CD4-positive, alpha-beta memory T cell (primary cell): ENCODE measurements at regions of chr16 and their contacts with region 1.

Region 1: GRCh38 chr16:4766874-4767628 is at the start of gene ZNF500:
- DNase-seq: peak; percentile 90 to 93 (median 93)
- H3K4me3 ChIP-seq: peak within 1 kb of the TSS; percentile 94 to 96
- H3K4me3 Mint-ChIP-seq: peak within 1 kb of the TSS; percentile 92 to 95 (median 94)
- H3K27ac ChIP-seq: peak within 1 kb of the TSS; percentile 79
- H3K27ac Mint-ChIP-seq: peak within 1 kb of the TSS; percentile 89 to 98 (median 94)
- H3K4me1 ChIP-seq: peaks cover 32% of the 10 kb centered on the region
- H3K4me1 Mint-ChIP-seq: peaks cover 16 to 50% (median 35%) of the 10 kb centered on the region in 4 donors
- H3K27me3 ChIP-seq: no peaks in the 10 kb centered on the region
- H3K27me3 Mint-ChIP-seq: no peaks in the 10 kb centered on the region
- total RNA-seq, gene ZNF500: 33.9 to 35.6 TPM

Region 2: DNA sequence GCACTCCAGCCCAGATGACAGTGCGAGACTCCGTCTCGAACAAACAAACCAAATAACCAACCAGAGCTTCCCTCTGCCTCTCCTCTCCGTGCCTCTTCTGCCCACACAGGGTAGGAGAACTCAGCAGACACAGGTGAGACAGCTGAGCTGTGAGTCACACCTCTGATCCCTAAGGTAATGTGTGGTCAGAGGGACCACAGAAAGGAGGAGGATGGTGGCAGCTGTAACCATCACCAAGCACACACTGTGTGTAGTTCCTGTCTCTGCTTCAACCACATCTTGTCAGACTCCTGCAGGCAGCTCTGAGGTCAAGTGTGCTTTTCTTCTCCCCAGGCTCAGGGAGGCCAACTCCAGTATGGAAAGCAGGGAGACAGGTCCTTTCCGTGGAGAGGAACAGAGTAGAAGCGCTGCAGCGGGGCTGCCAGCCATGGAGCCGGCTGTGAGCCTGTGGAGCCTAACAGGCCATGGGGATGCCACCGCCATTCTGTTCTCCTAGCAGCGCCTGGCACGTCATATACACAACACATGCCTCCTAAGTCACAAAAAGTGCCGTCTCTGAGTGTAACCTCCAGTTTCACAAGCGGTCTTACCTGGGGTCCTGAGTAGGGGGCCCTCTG is 66.6 kb before region 1 on chr16:
- CTCF ChIA-PET with region 1: no interaction called
- POLR2A ChIA-PET with region 1: interaction called, 27 read pairs
- intact Hi-C with region 1: no loop called
- DNase-seq: peak in 2 of 5 donors; percentile 34 to 71
- H3K4me3 ChIP-seq: no peak overlapping the region
- H3K4me3 Mint-ChIP-seq: no peak overlapping the region
- H3K27ac ChIP-seq: no peak overlapping the region
- H3K27ac Mint-ChIP-seq: peak overlapping the region in 2 of 7 donors; percentile 27 to 46
- H3K4me1 ChIP-seq: peaks cover 10% of the 10 kb centered on the region
- H3K4me1 Mint-ChIP-seq: peaks cover 0 to 19% (median 1%) of the 10 kb centered on the region in 4 donors
- H3K27me3 ChIP-seq: no peaks in the 10 kb centered on the region
- H3K27me3 Mint-ChIP-seq: no peaks in the 10 kb centered on the region

Region 3: GRCh38 chr16:4787627-4788482 is 20.8 kb after region 1 on chr16 and contains the start of gene SEPTIN12:
- CTCF ChIA-PET with region 1: no interaction called
- POLR2A ChIA-PET with region 1: no interaction called
- intact Hi-C with region 1: no loop called
- DNase-seq: no peak
- H3K4me3 ChIP-seq: no peak within 1 kb of the TSS
- H3K4me3 Mint-ChIP-seq: no peak within 1 kb of the TSS
- H3K27ac ChIP-seq: no peak within 1 kb of the TSS
- H3K27ac Mint-ChIP-seq: peak within 1 kb of the TSS in 4 of 7 donors; percentile 8 to 46 (median 36)
- H3K4me1 ChIP-seq: no peaks in the 10 kb centered on the region
- H3K4me1 Mint-ChIP-seq: no peaks in the 10 kb centered on the region
- H3K27me3 ChIP-seq: no peaks in the 10 kb centered on the region
- H3K27me3 Mint-ChIP-seq: peaks cover 0 to 2% of the 10 kb centered on the region in 2 donors
- total RNA-seq, gene SEPTIN12: not detected

Region 4: DNA sequence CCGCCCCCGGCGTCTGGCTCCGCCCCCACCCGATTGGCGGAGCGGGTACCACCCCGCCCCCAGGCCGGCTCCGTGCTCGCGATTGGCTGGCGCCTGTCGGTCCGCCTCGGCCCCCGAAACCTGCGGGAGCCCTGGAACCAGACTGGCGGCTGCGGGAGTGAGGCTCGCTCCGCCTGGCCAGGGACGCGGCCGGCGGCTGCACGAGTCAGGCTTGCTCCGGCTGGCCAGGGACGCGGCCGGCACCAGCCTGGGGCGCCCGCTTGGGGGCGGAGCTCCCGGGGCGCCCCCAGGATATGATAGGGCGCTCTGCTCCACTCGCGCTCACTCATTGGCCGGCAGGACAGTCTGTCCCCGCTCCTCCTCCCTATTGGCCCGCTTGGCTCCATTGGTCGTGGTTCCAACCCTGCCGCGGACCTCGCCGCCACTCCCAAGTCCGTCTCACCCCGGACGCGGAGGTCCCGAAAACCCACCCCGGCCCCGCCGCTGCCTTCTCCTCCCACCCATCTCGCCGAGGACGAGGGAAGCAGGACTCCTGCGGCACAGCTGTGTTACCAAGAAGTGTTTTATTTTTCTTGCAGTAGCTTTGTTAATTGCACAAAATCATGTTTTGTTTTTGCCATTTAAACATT is 35.7 kb after region 1 on chr16:
- CTCF ChIA-PET with region 1: no interaction called
- POLR2A ChIA-PET with region 1: interaction called, 58 read pairs
- intact Hi-C with region 1: loop called (anchors 1 kb)
- DNase-seq: peak; percentile 88 to 97 (median 92)
- H3K4me3 ChIP-seq: peak overlapping the region; percentile 52 to 58
- H3K4me3 Mint-ChIP-seq: peak overlapping the region; percentile 82 to 90 (median 85)
- H3K27ac ChIP-seq: peak overlapping the region; percentile 72
- H3K27ac Mint-ChIP-seq: peak overlapping the region; percentile 66 to 97 (median 82)
- H3K4me1 ChIP-seq: peaks cover 18% of the 10 kb centered on the region
- H3K4me1 Mint-ChIP-seq: peaks cover 1 to 25% (median 11%) of the 10 kb centered on the region in 4 donors
- H3K27me3 ChIP-seq: no peaks in the 10 kb centered on the region
- H3K27me3 Mint-ChIP-seq: no peaks in the 10 kb centered on the region